ENCODE measurements at regions of chr13 and their contacts with region 1.

Region 1: GRCh38 chr13:82356667-82357410 is 1525.4 kb downstream of the SLITRK1 start:
- DNase-seq: no peak
- H3K4me3 ChIP-seq: no peak overlapping the region
- H3K27ac ChIP-seq: no peak overlapping the region
- H3K27me3 ChIP-seq: no peaks in the 10 kb centered on the region
- CTCF ChIP-seq: peak in 41 of 56 donors; percentile 13 to 61 (median 36)

Region 2: DNA sequence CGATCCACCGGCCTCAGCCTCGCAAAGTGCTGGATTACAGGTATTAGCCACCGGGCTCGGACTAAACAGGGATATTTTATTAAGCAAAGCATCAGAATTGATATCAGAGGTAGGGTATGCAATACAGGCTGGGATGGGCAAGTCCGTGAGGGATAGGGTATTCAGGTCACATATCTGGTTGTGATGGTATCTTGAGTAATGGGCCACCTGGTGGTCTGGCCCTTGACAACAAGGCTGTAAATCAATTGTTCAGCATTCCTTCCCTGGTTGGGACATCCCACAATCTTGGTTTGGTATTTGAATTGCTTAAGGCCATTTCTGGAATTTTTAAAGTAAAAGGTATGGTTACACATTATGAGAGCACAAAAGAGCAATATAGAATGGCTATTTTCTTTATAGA is 62.6 kb before region 1 on chr13:
- intact Hi-C with region 1: no loop called
- DNase-seq: no peak
- H3K4me3 ChIP-seq: no peak overlapping the region
- H3K27ac ChIP-seq: no peak overlapping the region
- H3K27me3 ChIP-seq: no peaks in the 10 kb centered on the region
- CTCF ChIP-seq: no peak

Region 3: GRCh38 chr13:82791035-82791434 is 434.2 kb after region 1 on chr13:
- intact Hi-C with region 1: no loop called
- DNase-seq: no peak
- H3K4me3 ChIP-seq: no peak overlapping the region
- H3K27ac ChIP-seq: no peak overlapping the region
- H3K27me3 ChIP-seq: no peaks in the 10 kb centered on the region
- CTCF ChIP-seq: no peak

Region 4: GRCh38 chr13:83150616-83151307 is 793.9 kb after region 1 on chr13:
- intact Hi-C with region 1: loop called in 1 of 2 experiments (anchors 5 kb)
- DNase-seq: no peak
- H3K4me3 ChIP-seq: peak overlapping the region in 10 of 59 donors; percentile 5 to 34 (median 17)
- H3K27ac ChIP-seq: peak overlapping the region in 55 of 59 donors; percentile 3 to 90 (median 74)
- H3K27me3 ChIP-seq: no peaks in the 10 kb centered on the region
- CTCF ChIP-seq: peak in 54 of 56 donors; percentile 16 to 75 (median 52)

Measured in dorsolateral prefrontal cortex (tissue), 120 donors.